Heart left ventricle (tissue), 16 donors: ENCODE measurements at regions of chr6 and their contacts with region 1.

Region 1: GRCh38 chr6:32177788-32178546 is at the start of gene RNF5:
- DNase-seq: peak; percentile 92 to 98 (median 97)
- ATAC-seq: peak; percentile 82 to 89 (median 88)
- H3K4me3 ChIP-seq: peak within 1 kb of the TSS; percentile 47 to 99 (median 87)
- H3K27ac ChIP-seq: peak within 1 kb of the TSS; percentile 87 to 100 (median 97)
- H3K4me1 ChIP-seq: peaks cover 11 to 76% (median 52%) of the 10 kb centered on the region in 12 donors
- H3K27me3 ChIP-seq: no peaks in the 10 kb centered on the region
- CTCF ChIP-seq: no peak
- POLR2A ChIP-seq: peak in 1 of 2 donors; percentile 30
- total RNA-seq, gene RNF5: 62.7 to 136 (median 84.5) TPM

Region 2: GRCh38 chr6:30719791-30720737 is 1457.9 kb before region 1 on chr6 and contains the start of gene TUBB:
- intact Hi-C with region 1: no loop called
- DNase-seq: peak; percentile 97 to 98 (median 98)
- ATAC-seq: peak; percentile 63 to 84 (median 79)
- H3K4me3 ChIP-seq: peak within 1 kb of the TSS; percentile 51 to 94 (median 82)
- H3K27ac ChIP-seq: peak within 1 kb of the TSS; percentile 88 to 99 (median 96)
- H3K4me1 ChIP-seq: peaks cover 0 to 68% (median 42%) of the 10 kb centered on the region in 12 donors
- H3K27me3 ChIP-seq: no peaks in the 10 kb centered on the region
- CTCF ChIP-seq: peak in 2 of 12 donors; percentile 2 to 5
- POLR2A ChIP-seq: peak in 1 of 2 donors; percentile 78
- total RNA-seq, gene TUBB: 183 to 474 (median 238) TPM

Region 3: GRCh38 chr6:31665501-31666336 is 512.2 kb before region 1 on chr6 and contains the start of gene CSNK2B:
- intact Hi-C with region 1: loop called in 2 of 10 experiments (anchors 10 kb)
- DNase-seq: peak; percentile 99
- ATAC-seq: peak; percentile 90 to 94 (median 92)
- H3K4me3 ChIP-seq: peak within 1 kb of the TSS; percentile 64 to 95 (median 83)
- H3K27ac ChIP-seq: peak within 1 kb of the TSS; percentile 83 to 97 (median 95)
- H3K4me1 ChIP-seq: peaks cover 9 to 60% (median 38%) of the 10 kb centered on the region in 12 donors
- H3K27me3 ChIP-seq: no peaks in the 10 kb centered on the region
- CTCF ChIP-seq: peak in 4 of 12 donors; percentile 18 to 41 (median 34)
- POLR2A ChIP-seq: peak in 1 of 2 donors; percentile 56
- total RNA-seq, gene CSNK2B: 111 to 323 (median 116) TPM

Region 4: GRCh38 chr6:32195652-32195901 is 17.6 kb after region 1 on chr6:
- intact Hi-C with region 1: loop called in 4 of 10 experiments (anchors 1 kb)
- DNase-seq: peak; percentile 100
- ATAC-seq: peak in 3 of 4 donors; percentile 85 to 93 (median 86)
- H3K4me3 ChIP-seq: peak overlapping the region in 10 of 12 donors; percentile 65 to 93 (median 76)
- H3K27ac ChIP-seq: peak overlapping the region; percentile 92 to 100 (median 100)
- H3K4me1 ChIP-seq: peaks cover 7 to 61% (median 39%) of the 10 kb centered on the region in 12 donors
- H3K27me3 ChIP-seq: no peaks in the 10 kb centered on the region
- CTCF ChIP-seq: peak; percentile 48 to 73 (median 56)
- POLR2A ChIP-seq: no peak